ENCODE measurements at regions of chr3 and their contacts with region 1.

Region 1: GRCh38 chr3:32106280-32106928 is at the start of gene GPD1L:
- DNase-seq: peak; percentile 94 to 96
- H3K4me3 ChIP-seq: peak within 1 kb of the TSS; percentile 73
- H3K4me3 Mint-ChIP-seq: peak within 1 kb of the TSS; percentile 82
- H3K27ac Mint-ChIP-seq: no peak within 1 kb of the TSS
- H3K4me1 ChIP-seq: peaks cover 15% of the 10 kb centered on the region
- H3K4me1 Mint-ChIP-seq: peaks cover 13% of the 10 kb centered on the region
- H3K27me3 ChIP-seq: no peaks in the 10 kb centered on the region
- H3K27me3 Mint-ChIP-seq: no peaks in the 10 kb centered on the region
- CTCF ChIP-seq: no peak
- total RNA-seq, gene GPD1L: 8.8 and 9.3 TPM in 2 replicates

Region 2: GRCh38 chr3:31634481-31634880 is 471.9 kb before region 1 on chr3:
- CTCF ChIA-PET with region 1: no interaction called
- POLR2A ChIA-PET with region 1: no interaction called
- intact Hi-C with region 1: no loop called
- DNase-seq: no peak
- H3K4me3 ChIP-seq: no peak overlapping the region
- H3K4me3 Mint-ChIP-seq: no peak overlapping the region
- H3K27ac Mint-ChIP-seq: no peak overlapping the region
- H3K4me1 ChIP-seq: peaks cover 14% of the 10 kb centered on the region
- H3K4me1 Mint-ChIP-seq: no peaks in the 10 kb centered on the region
- H3K27me3 ChIP-seq: no peaks in the 10 kb centered on the region
- H3K27me3 Mint-ChIP-seq: no peaks in the 10 kb centered on the region
- CTCF ChIP-seq: no peak

Region 3: GRCh38 chr3:32045091-32045964 is 61.1 kb before region 1 on chr3:
- CTCF ChIA-PET with region 1: interaction called, 3 read pairs
- POLR2A ChIA-PET with region 1: no interaction called
- intact Hi-C with region 1: loop called (anchors 2 kb)
- DNase-seq: peak; percentile 64
- H3K4me3 ChIP-seq: no peak overlapping the region
- H3K4me3 Mint-ChIP-seq: peak overlapping the region; percentile 49
- H3K27ac Mint-ChIP-seq: peak overlapping the region; percentile 58
- H3K4me1 ChIP-seq: peaks cover 22% of the 10 kb centered on the region
- H3K4me1 Mint-ChIP-seq: peaks cover 17% of the 10 kb centered on the region
- H3K27me3 ChIP-seq: no peaks in the 10 kb centered on the region
- H3K27me3 Mint-ChIP-seq: no peaks in the 10 kb centered on the region
- CTCF ChIP-seq: no peak

Region 4: GRCh38 chr3:32056559-32057290 is 49.7 kb before region 1 on chr3:
- CTCF ChIA-PET with region 1: no interaction called
- POLR2A ChIA-PET with region 1: no interaction called
- intact Hi-C with region 1: loop called (anchors 5 kb)
- DNase-seq: peak; percentile 64 to 73
- H3K4me3 ChIP-seq: no peak overlapping the region
- H3K4me3 Mint-ChIP-seq: peak overlapping the region; percentile 36
- H3K27ac Mint-ChIP-seq: peak overlapping the region; percentile 89
- H3K4me1 ChIP-seq: peaks cover 44% of the 10 kb centered on the region
- H3K4me1 Mint-ChIP-seq: peaks cover 29% of the 10 kb centered on the region
- H3K27me3 ChIP-seq: no peaks in the 10 kb centered on the region
- H3K27me3 Mint-ChIP-seq: no peaks in the 10 kb centered on the region
- CTCF ChIP-seq: no peak

Region 5: GRCh38 chr3:32082721-32083120 is 23.7 kb before region 1 on chr3:
- CTCF ChIA-PET with region 1: no interaction called
- POLR2A ChIA-PET with region 1: interaction called, 3 read pairs
- intact Hi-C with region 1: loop called (anchors 2 kb)
- DNase-seq: no peak
- H3K4me3 ChIP-seq: no peak overlapping the region
- H3K4me3 Mint-ChIP-seq: peak overlapping the region; percentile 15
- H3K27ac Mint-ChIP-seq: no peak overlapping the region
- H3K4me1 ChIP-seq: peaks cover 17% of the 10 kb centered on the region
- H3K4me1 Mint-ChIP-seq: peaks cover 18% of the 10 kb centered on the region
- H3K27me3 ChIP-seq: no peaks in the 10 kb centered on the region
- H3K27me3 Mint-ChIP-seq: no peaks in the 10 kb centered on the region
- CTCF ChIP-seq: no peak

Measured in Caco-2 (cell line).